ENCODE measurements at regions of chr3 and their contacts with region 1.

Region 1: DNA sequence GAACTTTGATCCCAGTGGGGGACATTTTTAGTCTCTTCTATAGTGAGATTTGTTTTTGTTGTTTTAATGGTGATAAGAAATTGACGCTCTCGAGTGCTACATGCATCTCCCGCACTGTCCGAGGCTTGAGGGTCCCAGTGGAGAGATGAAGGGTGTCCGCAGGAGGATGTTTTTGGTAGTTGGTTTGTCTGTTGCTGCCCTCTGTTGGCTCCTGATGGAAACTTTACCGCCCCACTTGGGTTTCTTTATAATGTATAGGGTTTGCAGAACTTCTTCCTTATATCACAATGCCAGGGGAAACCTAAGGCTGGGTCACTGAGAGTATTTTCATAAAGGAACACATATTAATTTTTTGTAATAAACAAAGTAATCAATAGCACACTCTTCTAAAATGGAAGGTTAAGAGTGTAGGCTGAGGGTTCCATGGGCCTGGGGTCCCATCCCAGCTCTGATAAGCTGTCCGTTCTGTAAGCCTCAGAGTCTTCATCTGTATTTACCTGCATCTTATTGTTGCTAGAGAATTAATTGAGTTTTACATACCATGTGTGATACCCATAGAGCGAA is 185.3 kb upstream of the FEZF2 start:
- DNase-seq: peak; percentile 63
- H3K4me3 ChIP-seq: no peak overlapping the region
- H3K27ac ChIP-seq: no peak overlapping the region
- H3K4me1 ChIP-seq: no peaks in the 10 kb centered on the region
- CTCF ChIP-seq: peak; percentile 92

Region 2: DNA sequence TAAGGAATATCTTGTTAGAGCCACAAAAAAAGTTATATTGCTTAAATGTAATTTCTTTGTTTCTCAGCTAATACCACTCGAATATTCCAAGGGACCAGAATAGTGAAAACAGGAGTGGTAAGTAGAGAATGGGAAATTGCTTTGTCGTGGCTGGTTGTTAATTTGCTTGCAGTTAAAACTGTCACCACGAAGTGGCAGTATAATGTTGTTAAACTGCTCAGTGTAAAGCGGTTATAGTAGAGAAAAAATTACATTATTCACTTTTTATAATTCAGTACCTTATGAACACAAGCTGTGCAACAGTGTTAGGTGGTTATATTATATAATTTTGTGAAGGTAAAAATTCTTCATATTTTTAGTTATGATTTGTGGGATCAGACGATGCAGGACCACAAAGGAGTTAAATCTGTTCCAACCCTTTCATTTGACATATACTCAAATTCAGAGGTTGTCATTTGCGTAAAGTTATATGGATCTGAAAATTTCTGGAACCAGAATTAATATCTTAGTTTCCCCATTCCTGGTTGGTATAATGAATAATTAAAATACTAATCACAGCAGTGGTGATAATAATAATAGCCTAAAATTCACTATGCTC is 357.1 kb before region 1 on chr3:
- CTCF ChIA-PET with region 1: no interaction called
- POLR2A ChIA-PET with region 1: no interaction called
- intact Hi-C with region 1: loop called (anchors 2 kb)
- DNase-seq: peak; percentile 23
- H3K4me3 ChIP-seq: no peak overlapping the region
- H3K27ac ChIP-seq: no peak overlapping the region
- H3K4me1 ChIP-seq: no peaks in the 10 kb centered on the region
- CTCF ChIP-seq: peak; percentile 88

Region 3: DNA sequence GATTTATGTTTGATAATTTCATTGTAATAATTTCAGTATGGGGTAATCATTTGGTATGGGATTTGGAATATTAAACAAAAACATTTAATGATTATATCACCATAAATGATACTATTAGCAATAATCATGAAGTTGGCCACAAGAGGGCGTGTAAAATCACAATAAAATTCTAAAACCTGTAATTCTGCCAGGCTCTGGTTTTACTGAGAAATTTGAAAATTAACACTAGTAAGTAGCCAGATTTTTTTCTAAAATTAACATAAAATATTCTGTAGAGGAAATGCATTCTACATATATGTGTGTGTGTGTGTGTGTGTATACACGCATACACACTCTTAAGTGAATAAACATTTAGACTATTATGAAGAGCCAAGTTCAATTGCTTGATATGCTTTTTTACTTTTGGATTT is 225.8 kb before region 1 on chr3:
- CTCF ChIA-PET with region 1: no interaction called
- POLR2A ChIA-PET with region 1: interaction called, 3 read pairs
- intact Hi-C with region 1: loop called (anchors 1 kb)
- DNase-seq: peak; percentile 50
- H3K4me3 ChIP-seq: no peak overlapping the region
- H3K27ac ChIP-seq: no peak overlapping the region
- H3K4me1 ChIP-seq: no peaks in the 10 kb centered on the region
- CTCF ChIP-seq: peak; percentile 95

Region 4: GRCh38 chr3:62493109-62493801 is 65.4 kb before region 1 on chr3:
- CTCF ChIA-PET with region 1: no interaction called
- POLR2A ChIA-PET with region 1: no interaction called
- intact Hi-C with region 1: loop called (anchors 1 kb)
- DNase-seq: peak; percentile 62
- H3K4me3 ChIP-seq: no peak overlapping the region
- H3K27ac ChIP-seq: no peak overlapping the region
- H3K4me1 ChIP-seq: peaks cover 13% of the 10 kb centered on the region
- CTCF ChIP-seq: peak; percentile 84

Measured in OCI-LY7 (cell line).